Tibial artery (tissue), 4 donors: ENCODE measurements at regions of chr10 and their contacts with region 1.

Region 1: DNA sequence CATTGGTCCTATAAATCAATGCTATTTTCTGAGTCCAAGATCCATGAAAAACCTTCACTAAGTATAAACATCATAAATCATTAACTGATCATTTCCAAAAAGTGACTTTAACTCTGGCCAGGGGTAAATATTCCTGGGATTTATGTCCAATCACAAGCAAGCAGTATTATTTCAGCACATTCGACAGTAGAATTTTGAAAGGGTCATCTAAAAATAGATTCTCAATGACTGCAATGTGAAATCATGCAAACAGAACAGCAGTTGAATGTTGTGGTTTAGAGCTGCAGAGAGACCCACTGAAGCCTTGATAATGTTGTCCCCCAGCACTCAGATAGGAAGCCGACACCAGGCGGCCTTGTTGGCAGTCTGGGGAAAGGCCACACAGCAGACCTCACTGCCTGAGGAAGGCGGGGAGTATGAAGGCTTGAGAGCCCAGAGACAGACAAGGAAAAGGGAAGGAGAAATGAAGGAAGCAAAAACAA is 38.1 kb downstream of the FAM107B start:
- DNase-seq: peak in 1 of 2 donors; percentile 34
- H3K4me3 ChIP-seq: no peak overlapping the region
- H3K27ac ChIP-seq: peak overlapping the region; percentile 82 to 87
- H3K4me1 ChIP-seq: peaks cover 0 to 63% (median 44%) of the 10 kb centered on the region in 4 donors
- H3K27me3 ChIP-seq: no peaks in the 10 kb centered on the region
- CTCF ChIP-seq: peak in 1 of 2 experiments; percentile 7

Region 2: GRCh38 chr10:14653271-14654228 is 83.1 kb before region 1 on chr10:
- intact Hi-C with region 1: loop called (anchors 5 kb)
- DNase-seq: no peak
- H3K4me3 ChIP-seq: no peak overlapping the region
- H3K27ac ChIP-seq: peak overlapping the region; percentile 51 to 74
- H3K4me1 ChIP-seq: peaks cover 6 to 52% (median 19%) of the 10 kb centered on the region in 4 donors
- H3K27me3 ChIP-seq: no peaks in the 10 kb centered on the region
- CTCF ChIP-seq: no peak

Region 3: DNA sequence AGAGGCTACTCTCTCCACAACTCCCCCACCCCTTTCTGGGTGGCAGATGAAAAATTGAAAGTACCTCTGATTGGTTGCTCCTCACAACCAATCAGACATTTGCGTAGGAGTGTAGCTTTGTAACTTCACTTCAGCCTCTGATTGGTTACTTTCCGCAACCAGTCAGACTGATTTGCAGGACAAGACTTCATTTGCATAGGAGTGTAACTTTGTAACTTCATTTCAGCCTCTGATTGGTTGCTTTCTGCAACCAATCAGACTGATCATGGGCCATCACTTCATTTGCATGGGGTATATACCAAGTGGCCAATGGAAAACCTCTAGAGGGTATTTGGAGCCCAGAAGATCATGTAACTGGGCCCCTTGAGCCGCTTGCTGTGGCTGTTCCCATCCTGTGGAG is 75.6 kb after region 1 on chr10:
- intact Hi-C with region 1: no loop called
- DNase-seq: no peak
- H3K4me3 ChIP-seq: no peak overlapping the region
- H3K27ac ChIP-seq: no peak overlapping the region
- H3K4me1 ChIP-seq: no peaks in the 10 kb centered on the region
- H3K27me3 ChIP-seq: no peaks in the 10 kb centered on the region
- CTCF ChIP-seq: no peak

Region 4: DNA sequence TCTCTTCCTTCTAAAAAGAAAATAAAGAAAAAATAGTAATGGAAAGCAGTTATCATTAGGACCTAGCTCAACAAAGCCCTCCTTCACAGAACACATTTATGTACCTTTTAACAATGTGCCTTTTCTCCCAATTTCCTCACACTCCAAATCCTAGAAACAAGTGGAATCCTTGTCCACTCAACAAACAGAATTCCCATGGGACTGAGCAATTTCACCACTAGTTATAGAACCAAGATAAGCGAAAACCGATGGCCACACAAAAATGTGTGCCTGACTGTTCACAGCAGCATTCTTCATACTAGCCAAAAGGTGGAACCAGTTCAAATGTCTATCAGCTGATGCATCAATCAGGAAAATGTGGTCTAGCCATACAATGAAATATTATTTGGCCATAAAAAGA is 199.9 kb after region 1 on chr10:
- intact Hi-C with region 1: no loop called
- DNase-seq: no peak
- H3K4me3 ChIP-seq: no peak overlapping the region
- H3K27ac ChIP-seq: no peak overlapping the region
- H3K4me1 ChIP-seq: no peaks in the 10 kb centered on the region
- H3K27me3 ChIP-seq: no peaks in the 10 kb centered on the region
- CTCF ChIP-seq: no peak